HCT116 (cell line): ENCODE measurements at regions of chr1 and their contacts with region 1.

Region 1: GRCh38 chr1:89974701-89975470 is 20.0 kb upstream of the ZNF326 start:
- DNase-seq: no peak
- ATAC-seq: no peak
- H3K4me3 ChIP-seq: no peak overlapping the region
- H3K27ac ChIP-seq: no peak overlapping the region
- H3K4me1 ChIP-seq: no peaks in the 10 kb centered on the region; a peak in 1 of 4 replicates
- H3K27me3 ChIP-seq: no peaks in the 10 kb centered on the region
- CTCF ChIP-seq: no peak
- POLR2A ChIP-seq: no peak
- RAD21 ChIP-seq: no peak

Region 2: GRCh38 chr1:89622895-89623294 is 352.0 kb before region 1 on chr1:
- CTCF ChIA-PET with region 1: no interaction called
- POLR2A ChIA-PET with region 1: no interaction called
- RAD21 ChIA-PET with region 1: no interaction called
- intact Hi-C with region 1: loop called (anchors 10 kb)
- DNase-seq: no peak
- ATAC-seq: no peak
- H3K4me3 ChIP-seq: no peak overlapping the region
- H3K27ac ChIP-seq: no peak overlapping the region
- H3K4me1 ChIP-seq: no peaks in the 10 kb centered on the region
- H3K27me3 ChIP-seq: no peaks in the 10 kb centered on the region
- CTCF ChIP-seq: 0 out of 6 replicates have a peak, but pooled peaks of 2 of the 3 experiments have one; percentile 7 to 8
- POLR2A ChIP-seq: no peak
- RAD21 ChIP-seq: peak; percentile 27

Region 3: DNA sequence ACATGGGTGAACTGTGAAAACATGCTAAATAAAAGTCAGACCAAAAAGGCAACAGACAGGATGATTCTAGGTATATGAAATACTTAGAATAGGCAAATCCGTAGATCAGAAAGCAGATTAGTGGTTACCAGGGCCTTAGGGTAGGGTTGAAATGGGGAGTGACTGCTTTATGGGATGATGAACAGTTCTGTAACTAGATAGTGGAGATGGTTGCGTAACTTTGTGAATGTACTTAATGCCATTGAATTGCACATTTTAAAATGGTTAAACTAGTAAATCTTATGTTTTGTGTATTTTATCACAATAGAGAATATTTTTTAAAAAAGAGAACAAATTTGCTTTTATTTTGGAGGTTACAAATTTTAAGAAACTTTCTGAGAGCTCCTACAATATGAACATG is 37.4 kb after region 1 on chr1:
- CTCF ChIA-PET with region 1: no interaction called
- POLR2A ChIA-PET with region 1: no interaction called
- RAD21 ChIA-PET with region 1: no interaction called
- intact Hi-C with region 1: no loop called
- DNase-seq: no peak
- ATAC-seq: no peak
- H3K4me3 ChIP-seq: no peak overlapping the region
- H3K27ac ChIP-seq: no peak overlapping the region
- H3K4me1 ChIP-seq: no peaks in the 10 kb centered on the region
- H3K27me3 ChIP-seq: no peaks in the 10 kb centered on the region
- CTCF ChIP-seq: no peak
- POLR2A ChIP-seq: no peak
- RAD21 ChIP-seq: no peak